Activated CD4-positive, alpha-beta T cell treated with anti-CD3 and anti-CD28 coated beads, Interleukin-2, amount 10 ng/mL, durations not matched to agents 24 days and 14 days (primary cell): ENCODE measurements at regions of chr12 and their contacts with region 1.

Region 1: GRCh38 chr12:109967383-109968031 is 28.7 kb downstream of the GIT2 start:
- DNase-seq: no peak
- H3K4me3 Mint-ChIP-seq: peak overlapping the region; percentile 44
- H3K27ac Mint-ChIP-seq: peak overlapping the region; percentile 76
- H3K4me1 Mint-ChIP-seq: peaks cover 22% of the 10 kb centered on the region
- H3K27me3 Mint-ChIP-seq: no peaks in the 10 kb centered on the region

Region 2: DNA sequence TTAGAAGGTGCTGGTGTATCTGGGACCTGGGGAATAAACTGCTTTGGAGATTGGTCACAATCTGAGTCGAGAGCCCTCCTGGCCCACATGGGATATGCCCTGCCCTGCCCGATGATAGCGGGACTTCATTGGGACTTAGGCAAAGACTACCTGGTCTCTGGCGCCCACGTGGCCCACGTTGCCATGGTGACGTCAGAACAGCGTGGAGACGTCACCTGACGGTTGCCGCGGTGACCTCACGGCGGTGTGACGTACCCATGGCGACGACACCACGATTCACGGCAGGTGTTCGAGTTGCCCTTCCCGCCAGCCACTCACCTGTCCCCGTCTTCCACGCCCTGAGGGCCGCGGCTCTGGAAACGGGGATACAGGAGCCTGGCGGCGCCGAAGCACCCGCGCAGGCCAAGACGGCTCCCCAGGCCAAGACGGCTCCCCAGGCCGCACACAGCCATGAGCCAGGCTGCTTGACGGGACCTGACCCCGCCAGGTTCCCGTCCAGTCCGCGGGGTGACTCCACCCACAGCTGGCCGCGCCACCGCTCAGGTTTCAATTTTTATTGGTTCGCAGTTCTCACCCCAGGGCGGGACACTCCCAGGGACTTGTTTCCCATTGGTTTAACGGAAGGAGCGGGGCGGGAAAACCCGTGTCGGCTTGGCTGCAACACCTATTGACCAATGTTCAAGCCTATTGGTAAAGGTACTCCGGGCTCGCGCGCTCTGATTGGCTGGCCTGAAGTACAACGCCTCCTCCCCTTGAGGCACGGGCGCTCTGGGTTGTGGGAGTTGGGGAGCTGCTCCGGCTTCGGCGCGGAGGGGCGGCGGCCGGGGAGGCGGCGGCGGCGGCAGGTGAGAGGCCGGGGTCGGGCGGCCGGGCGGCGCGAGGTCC is 394.2 kb before region 1 on chr12 and contains the starts of genes MMAB and MVK:
- intact Hi-C with region 1: no loop called
- DNase-seq: peak; percentile 99
- H3K4me3 Mint-ChIP-seq: peak within 1 kb of the TSS; percentile 93
- H3K27ac Mint-ChIP-seq: peak within 1 kb of the TSS; percentile 95
- H3K4me1 Mint-ChIP-seq: peaks cover 22% of the 10 kb centered on the region
- H3K27me3 Mint-ChIP-seq: no peaks in the 10 kb centered on the region
- total RNA-seq, gene MMAB: 44.3 and 45.8 TPM in 2 replicates
- total RNA-seq, gene MVK: 20.7 and 21.5 TPM in 2 replicates

Region 3: DNA sequence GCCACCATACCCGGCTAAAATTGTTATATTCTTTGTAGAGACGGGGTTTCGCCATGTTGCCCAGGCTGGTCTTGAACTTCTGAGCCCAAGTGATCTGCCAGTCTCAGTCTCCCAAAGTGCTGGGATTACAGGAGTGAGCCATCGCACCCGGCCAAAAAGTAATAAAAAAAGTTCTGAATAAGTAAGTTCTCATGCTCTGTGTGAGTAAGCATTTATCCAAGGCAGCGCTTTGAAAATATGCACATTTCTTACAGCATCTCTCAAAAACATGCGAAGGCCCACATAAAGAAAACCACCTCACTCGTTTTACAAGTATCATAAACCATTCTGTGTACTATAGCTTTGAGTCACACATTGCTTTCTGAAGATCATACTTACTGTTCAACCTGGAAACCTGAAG is 20.1 kb after region 1 on chr12:
- intact Hi-C with region 1: loop called (anchors 2 kb)
- DNase-seq: no peak
- H3K4me3 Mint-ChIP-seq: peak overlapping the region; percentile 47
- H3K27ac Mint-ChIP-seq: peak overlapping the region; percentile 86
- H3K4me1 Mint-ChIP-seq: peaks cover 42% of the 10 kb centered on the region
- H3K27me3 Mint-ChIP-seq: no peaks in the 10 kb centered on the region